B cell (primary cell): ENCODE measurements at regions of chr1 and their contacts with region 1.

Region 1: GRCh38 chr1:4048076-4048475 is 148.0 kb upstream of the C1orf174 start:
- DNase-seq: peak; percentile 40
- ATAC-seq: no peak
- H3K4me3 ChIP-seq: no peak overlapping the region
- H3K4me3 Mint-ChIP-seq: peak overlapping the region; percentile 67
- H3K27ac ChIP-seq: no peak overlapping the region
- H3K27ac Mint-ChIP-seq: peak overlapping the region; percentile 37
- H3K4me1 ChIP-seq: peaks cover 43 to 48% of the 10 kb centered on the region in 2 donors
- H3K4me1 Mint-ChIP-seq: peaks cover 63% of the 10 kb centered on the region
- H3K27me3 ChIP-seq: no peaks in the 10 kb centered on the region
- H3K27me3 Mint-ChIP-seq: peaks cover 2% of the 10 kb centered on the region
- CTCF ChIP-seq: no peak

Region 2: DNA sequence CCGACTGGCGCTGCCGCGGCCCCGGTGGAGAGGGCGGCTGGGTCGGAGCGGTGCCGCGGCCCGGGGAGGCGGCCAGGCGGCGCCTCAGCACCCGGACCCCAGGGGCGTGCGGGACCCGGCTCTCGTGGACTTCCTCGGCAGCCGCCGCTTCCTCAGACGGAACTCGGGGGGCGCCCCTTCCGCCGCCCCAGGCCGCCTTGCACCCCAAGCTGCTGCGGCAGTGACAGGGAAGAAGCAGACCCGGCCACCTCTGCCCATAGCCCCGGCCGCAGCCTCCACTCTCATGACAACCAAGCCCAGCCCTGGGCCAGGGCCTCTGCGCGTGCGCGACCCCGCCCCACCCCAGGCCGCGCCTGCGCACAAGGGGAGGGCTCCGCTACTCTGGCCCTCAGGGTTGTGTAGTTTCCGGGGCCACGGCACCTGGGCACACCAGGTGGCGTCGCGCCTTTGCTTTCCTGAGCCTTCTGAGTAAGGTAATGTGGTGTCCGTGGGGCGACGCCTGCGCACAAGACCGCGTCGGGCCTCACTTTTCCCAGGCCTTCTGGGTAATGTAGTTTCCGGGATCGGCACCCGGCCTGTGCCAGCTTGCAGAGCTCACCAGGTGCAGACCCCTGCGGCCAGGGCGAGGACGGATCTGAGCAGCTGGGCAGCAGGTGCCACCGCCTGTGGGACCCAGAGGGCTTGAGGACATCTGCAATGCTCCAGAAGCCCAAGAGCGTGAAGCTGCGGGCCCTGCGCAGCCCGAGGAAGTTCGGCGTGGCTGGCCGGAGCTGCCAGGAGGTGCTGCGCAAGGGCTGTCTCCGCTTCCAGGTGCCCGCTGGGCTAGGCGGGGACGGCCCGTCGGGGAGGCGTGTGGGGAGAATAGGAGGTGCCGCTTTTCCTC is 190.9 kb before region 1 on chr1 and contains the starts of genes CEP104 and DFFB:
- CTCF ChIA-PET with region 1: interaction called, 4 read pairs
- POLR2A ChIA-PET with region 1: no interaction called
- intact Hi-C with region 1: loop called (anchors 1 kb)
- DNase-seq: peak; percentile 99
- ATAC-seq: peak; percentile 97
- H3K4me3 ChIP-seq: peak within 1 kb of the TSS; percentile 59 to 92 (median 85)
- H3K4me3 Mint-ChIP-seq: peak within 1 kb of the TSS; percentile 98
- H3K27ac ChIP-seq: peak within 1 kb of the TSS; percentile 59 to 68
- H3K27ac Mint-ChIP-seq: peak within 1 kb of the TSS; percentile 93
- H3K4me1 ChIP-seq: peaks cover 20 to 24% of the 10 kb centered on the region in 2 donors
- H3K4me1 Mint-ChIP-seq: peaks cover 31% of the 10 kb centered on the region
- H3K27me3 ChIP-seq: no peaks in the 10 kb centered on the region
- H3K27me3 Mint-ChIP-seq: no peaks in the 10 kb centered on the region
- CTCF ChIP-seq: peak; percentile 46
- total RNA-seq, gene CEP104: 71.8 and 76.2 TPM in 2 replicates
- total RNA-seq, gene DFFB: 17.4 and 20.7 TPM in 2 replicates

Region 3: GRCh38 chr1:3910857-3911845 is 136.9 kb before region 1 on chr1:
- CTCF ChIA-PET with region 1: interaction called, 31 read pairs
- POLR2A ChIA-PET with region 1: no interaction called
- intact Hi-C with region 1: loop called (anchors 1 kb)
- DNase-seq: peak; percentile 84
- ATAC-seq: peak; percentile 86
- H3K4me3 ChIP-seq: no peak overlapping the region
- H3K4me3 Mint-ChIP-seq: peak overlapping the region; percentile 72
- H3K27ac ChIP-seq: no peak overlapping the region
- H3K27ac Mint-ChIP-seq: peak overlapping the region; percentile 6
- H3K4me1 ChIP-seq: peaks cover 4 to 23% of the 10 kb centered on the region in 2 donors
- H3K4me1 Mint-ChIP-seq: peaks cover 25% of the 10 kb centered on the region
- H3K27me3 ChIP-seq: peaks cover 0 to 15% (median 0%) of the 10 kb centered on the region in 4 experiments
- H3K27me3 Mint-ChIP-seq: peaks cover 6% of the 10 kb centered on the region
- CTCF ChIP-seq: peak; percentile 90

Region 4: GRCh38 chr1:4006676-4007374 is 41.3 kb before region 1 on chr1:
- CTCF ChIA-PET with region 1: interaction called, 3 read pairs
- POLR2A ChIA-PET with region 1: interaction called, 6 read pairs
- intact Hi-C with region 1: loop called (anchors 1 kb)
- DNase-seq: peak; percentile 83
- ATAC-seq: peak; percentile 58
- H3K4me3 ChIP-seq: no peak overlapping the region
- H3K4me3 Mint-ChIP-seq: peak overlapping the region; percentile 43
- H3K27ac ChIP-seq: peak overlapping the region; percentile 82 to 95
- H3K27ac Mint-ChIP-seq: peak overlapping the region; percentile 96
- H3K4me1 ChIP-seq: peaks cover 4 to 26% of the 10 kb centered on the region in 2 donors
- H3K4me1 Mint-ChIP-seq: peaks cover 15% of the 10 kb centered on the region
- H3K27me3 ChIP-seq: no peaks in the 10 kb centered on the region
- H3K27me3 Mint-ChIP-seq: no peaks in the 10 kb centered on the region
- CTCF ChIP-seq: no peak

Region 5: DNA sequence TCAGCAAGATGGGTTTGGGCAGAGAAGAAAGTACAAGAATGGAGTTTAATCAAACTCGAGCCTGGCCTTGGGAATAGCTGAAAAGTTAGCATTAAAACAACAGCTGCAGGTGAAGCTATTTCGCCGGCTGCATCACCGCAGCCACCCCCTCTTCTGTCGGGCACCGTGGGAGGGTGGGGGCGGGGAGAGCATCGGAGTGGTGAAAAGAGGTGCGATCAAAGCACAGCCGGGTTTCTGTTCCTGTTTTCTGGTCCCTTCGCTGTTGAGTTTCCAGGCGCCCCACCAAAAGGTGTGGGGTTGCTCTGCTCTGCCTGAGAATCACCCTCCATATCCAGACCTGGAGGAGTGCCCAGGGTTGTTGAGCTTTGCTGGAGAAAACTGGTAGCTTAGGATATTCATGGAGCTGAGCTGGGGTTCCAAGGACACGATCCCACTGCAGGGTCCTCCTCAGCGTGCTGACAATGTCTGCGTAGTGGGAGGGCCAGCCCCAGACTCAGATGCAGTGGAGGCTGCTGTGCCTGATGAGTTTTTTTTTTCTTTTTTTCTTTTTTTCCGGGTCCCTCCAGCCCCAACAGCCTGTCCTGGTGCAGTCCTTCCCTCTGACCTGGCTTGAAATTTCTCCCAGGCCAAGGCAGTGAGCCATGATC is 20.5 kb before region 1 on chr1:
- CTCF ChIA-PET with region 1: interaction called, 20 read pairs
- POLR2A ChIA-PET with region 1: interaction called, 19 read pairs
- intact Hi-C with region 1: loop called (anchors 1 kb)
- DNase-seq: peak; percentile 94
- ATAC-seq: peak; percentile 93
- H3K4me3 ChIP-seq: peak overlapping the region in 3 of 5 experiments; percentile 19 to 47 (median 30)
- H3K4me3 Mint-ChIP-seq: peak overlapping the region; percentile 82
- H3K27ac ChIP-seq: peak overlapping the region; percentile 69 to 80
- H3K27ac Mint-ChIP-seq: peak overlapping the region; percentile 92
- H3K4me1 ChIP-seq: peaks cover 33 to 43% of the 10 kb centered on the region in 2 donors
- H3K4me1 Mint-ChIP-seq: peaks cover 64% of the 10 kb centered on the region
- H3K27me3 ChIP-seq: no peaks in the 10 kb centered on the region
- H3K27me3 Mint-ChIP-seq: no peaks in the 10 kb centered on the region
- CTCF ChIP-seq: no peak